Posterior vena cava (tissue), 2 donors: ENCODE measurements at regions of chr1 and their contacts with region 1.

Region 1: DNA sequence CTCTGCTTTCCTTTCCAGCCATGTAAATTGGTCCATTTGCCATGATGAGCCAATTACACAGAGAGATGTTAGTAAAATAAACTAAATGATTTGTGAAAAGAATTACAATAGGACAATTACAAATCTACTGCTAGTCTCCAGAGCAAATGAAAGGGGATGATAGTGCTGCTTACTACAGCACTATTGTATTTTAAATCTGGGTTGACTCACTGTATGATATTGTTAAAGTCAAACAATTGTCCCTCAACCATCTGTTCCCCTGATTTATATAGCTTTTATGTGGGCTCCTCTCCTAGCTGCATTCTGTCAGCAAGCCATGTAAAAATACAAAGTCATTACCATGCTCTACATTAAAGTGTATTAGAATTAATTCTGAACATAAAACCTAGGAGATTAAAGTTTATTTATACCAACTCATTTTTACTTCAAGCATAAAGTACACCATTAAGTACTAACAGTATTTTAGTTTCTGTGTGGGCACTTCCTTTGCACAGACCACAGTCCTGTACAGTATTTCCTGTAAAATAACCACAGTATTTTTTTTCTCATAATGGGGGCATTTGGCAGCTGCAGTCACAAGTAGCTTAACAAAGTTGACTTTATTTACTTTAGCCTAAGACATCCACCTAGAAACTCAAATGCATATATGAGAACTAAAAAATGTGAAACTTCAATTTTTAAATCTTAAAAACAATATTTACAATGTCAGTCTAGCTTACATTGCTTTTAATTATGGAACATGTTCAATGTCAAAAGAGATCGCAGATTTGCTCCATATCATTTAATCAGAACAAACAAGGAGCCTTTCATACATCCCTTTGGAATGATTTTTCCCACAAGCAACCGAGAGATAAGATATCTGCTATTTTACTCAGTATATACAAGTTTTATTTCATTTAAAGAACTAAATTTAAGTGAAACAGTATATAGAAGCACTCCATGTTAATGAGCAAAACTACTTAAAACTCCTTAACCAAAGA is 135.6 kb downstream of the VAV3 start:
- DNase-seq: no peak

Region 2: GRCh38 chr1:107877092-107877491 is 47.7 kb after region 1 on chr1:
- intact Hi-C with region 1: no loop called
- DNase-seq: no peak

Region 3: DNA sequence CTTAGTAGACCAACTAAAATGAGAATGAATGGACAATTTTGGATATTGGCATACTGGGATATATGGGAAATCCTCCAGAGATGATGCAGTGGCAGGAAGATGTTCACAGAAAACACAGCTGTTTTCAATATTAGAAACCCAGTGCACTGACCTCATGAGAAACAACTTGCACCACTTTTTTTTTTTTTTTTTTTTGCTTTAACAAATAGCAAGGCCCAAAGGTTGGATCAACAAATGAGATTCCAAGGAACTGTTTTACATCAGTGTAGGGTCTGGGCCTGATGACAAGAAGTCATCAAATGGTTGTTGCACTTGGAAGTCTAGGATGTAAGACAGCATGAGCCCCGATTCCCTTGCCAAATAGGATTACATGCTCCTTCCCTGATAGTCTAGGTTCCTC is 260.1 kb after region 1 on chr1:
- intact Hi-C with region 1: loop called in 1 of 2 experiments (anchors 5 kb)
- DNase-seq: no peak